Common myeloid progenitor, CD34-positive (primary cell): ENCODE measurements at regions of chr7 and their contacts with region 1.

Region 1: DNA sequence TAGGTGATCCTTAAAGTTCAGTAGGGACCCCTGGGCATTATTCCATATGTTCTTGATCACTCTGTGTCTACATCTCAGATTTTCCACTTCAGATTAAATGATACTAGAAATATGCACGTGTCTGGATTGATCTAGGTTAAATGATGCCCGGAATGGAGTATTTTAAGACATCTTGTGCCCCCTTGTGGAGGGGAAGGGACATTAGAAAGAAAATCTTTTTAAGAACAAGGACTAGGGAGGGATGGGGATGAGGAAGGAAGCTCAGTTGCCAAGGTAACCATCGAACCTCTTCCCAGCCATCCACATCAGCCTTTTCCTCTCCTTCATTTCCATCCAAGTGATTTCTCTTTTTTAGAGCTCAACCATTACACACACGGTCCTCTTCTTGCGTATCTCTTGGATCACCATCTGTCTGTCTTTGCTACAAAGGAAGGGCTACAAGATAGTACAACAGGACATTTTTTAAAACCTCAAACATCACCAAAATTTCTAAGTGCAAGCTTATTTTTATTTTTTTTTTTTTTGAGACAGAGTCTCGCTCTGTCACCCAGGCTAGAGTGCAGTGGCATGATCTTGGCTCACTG is 40.5 kb downstream of the PRSS2 start:
- DNase-seq: peak; percentile 59 to 69 (median 68)
- H3K4me3 ChIP-seq: no peak overlapping the region
- H3K27ac ChIP-seq: no peak overlapping the region
- H3K4me1 ChIP-seq: peaks cover 41 to 45% (median 42%) of the 10 kb centered on the region in 4 experiments
- H3K27me3 ChIP-seq: no peaks in the 10 kb centered on the region

Region 2: GRCh38 chr7:142587578-142588191 is 223.6 kb before region 1 on chr7:
- CTCF ChIA-PET with region 1: interaction called, 16 read pairs
- POLR2A ChIA-PET with region 1: no interaction called
- DNase-seq: peak; percentile 87 to 88 (median 88)
- H3K4me3 ChIP-seq: no peak overlapping the region
- H3K27ac ChIP-seq: no peak overlapping the region
- H3K4me1 ChIP-seq: peaks cover 2 to 27% (median 22%) of the 10 kb centered on the region in 4 experiments
- H3K27me3 ChIP-seq: no peaks in the 10 kb centered on the region

Region 3: GRCh38 chr7:142626420-142627035 is 184.7 kb before region 1 on chr7:
- CTCF ChIA-PET with region 1: interaction called, 167 read pairs
- POLR2A ChIA-PET with region 1: interaction called, 3 read pairs
- DNase-seq: peak; percentile 69 to 85 (median 80)
- H3K4me3 ChIP-seq: peak overlapping the region in 2 of 7 experiments; percentile 15 to 51
- H3K27ac ChIP-seq: no peak overlapping the region
- H3K4me1 ChIP-seq: peaks cover 3 to 25% (median 13%) of the 10 kb centered on the region in 4 experiments
- H3K27me3 ChIP-seq: no peaks in the 10 kb centered on the region

Region 4: DNA sequence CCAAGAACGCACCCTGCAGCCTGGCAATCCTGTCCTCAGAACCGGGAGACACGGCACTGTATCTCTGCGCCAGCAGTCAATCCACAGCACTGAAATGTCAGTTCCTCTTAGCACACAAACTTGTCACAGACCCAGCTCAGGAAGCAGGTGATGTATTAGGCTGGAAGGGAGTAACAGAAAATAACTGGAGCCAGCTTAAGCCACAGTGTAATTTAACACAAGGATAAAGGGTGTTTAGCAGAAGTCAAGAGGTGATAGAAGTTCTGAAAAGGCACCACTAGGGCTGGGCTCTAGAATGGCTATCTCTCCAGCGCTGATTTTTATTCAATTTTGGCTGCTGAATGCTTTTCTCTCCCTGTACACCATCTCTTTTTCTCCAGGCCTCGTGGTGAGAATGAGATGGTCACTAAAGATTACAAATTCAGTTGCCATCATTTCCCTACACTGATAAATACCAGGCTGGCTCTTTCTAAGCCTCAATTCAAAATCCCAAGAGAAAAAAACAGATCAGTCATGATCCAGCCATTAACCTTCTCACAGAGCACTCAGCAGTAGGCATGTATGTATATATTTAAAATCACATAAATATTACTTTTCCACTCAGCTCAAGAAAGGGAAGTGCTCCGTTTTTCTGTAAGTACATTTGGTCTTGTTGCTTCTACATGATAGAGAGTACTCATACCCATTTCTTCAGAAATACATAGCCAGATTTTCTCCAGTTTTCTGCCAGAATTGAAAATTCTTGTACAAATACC is 164.7 kb before region 1 on chr7:
- CTCF ChIA-PET with region 1: interaction called, 10 read pairs
- POLR2A ChIA-PET with region 1: no interaction called
- DNase-seq: peak; percentile 69 to 95 (median 90)
- H3K4me3 ChIP-seq: peak overlapping the region in 6 of 7 experiments; percentile 49 to 78 (median 63)
- H3K27ac ChIP-seq: peak overlapping the region; percentile 46 to 84
- H3K4me1 ChIP-seq: peaks cover 9 to 42% (median 23%) of the 10 kb centered on the region in 4 experiments
- H3K27me3 ChIP-seq: no peaks in the 10 kb centered on the region

Region 5: DNA sequence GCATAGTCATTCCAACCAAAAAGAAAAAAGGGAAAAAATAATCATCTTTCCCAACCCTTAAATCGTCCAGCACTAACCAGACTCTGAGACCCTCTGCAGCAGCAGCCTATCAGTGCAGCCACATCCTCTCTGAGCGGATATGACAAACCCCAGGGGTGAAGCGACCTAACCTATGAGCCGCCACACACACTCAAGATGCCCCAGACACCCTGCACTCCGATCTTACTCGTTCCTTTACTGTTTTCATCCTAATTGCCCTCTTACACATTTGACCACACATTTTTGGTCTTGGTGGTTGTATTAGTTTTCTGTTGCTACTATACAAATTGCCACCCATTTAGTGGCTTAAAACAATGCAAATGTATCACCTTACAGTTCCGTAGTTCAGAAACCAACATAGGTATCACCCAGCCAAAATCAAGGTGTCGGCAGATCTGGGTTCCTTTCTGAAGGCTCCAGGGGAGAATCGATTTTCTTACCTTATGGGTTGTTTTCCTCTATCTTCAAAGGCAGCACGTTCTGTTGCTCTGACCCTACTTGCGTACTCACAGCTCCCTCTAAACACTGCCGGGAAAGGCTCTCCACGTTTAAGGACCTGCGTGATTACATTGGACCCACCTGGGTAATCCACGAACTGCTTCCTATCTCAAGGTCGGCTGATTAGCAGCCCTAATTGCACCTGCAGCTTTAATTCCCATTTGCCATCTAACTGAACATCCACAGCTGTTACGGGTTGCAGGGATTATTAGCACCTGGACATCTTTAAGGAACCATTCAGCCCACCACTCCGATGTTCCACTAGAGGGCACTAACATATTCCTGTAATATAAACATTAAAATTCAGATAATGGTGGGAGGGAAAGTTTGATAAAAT is 99.3 kb before region 1 on chr7:
- CTCF ChIA-PET with region 1: interaction called, 13 read pairs
- POLR2A ChIA-PET with region 1: interaction called, 23 read pairs
- DNase-seq: peak; percentile 52 to 87 (median 56)
- H3K4me3 ChIP-seq: peak overlapping the region in 1 of 7 experiments; percentile 54
- H3K27ac ChIP-seq: peak overlapping the region in 1 of 2 experiments; percentile 74
- H3K4me1 ChIP-seq: peaks cover 50 to 91% (median 82%) of the 10 kb centered on the region in 4 experiments
- H3K27me3 ChIP-seq: no peaks in the 10 kb centered on the region

Region 6: DNA sequence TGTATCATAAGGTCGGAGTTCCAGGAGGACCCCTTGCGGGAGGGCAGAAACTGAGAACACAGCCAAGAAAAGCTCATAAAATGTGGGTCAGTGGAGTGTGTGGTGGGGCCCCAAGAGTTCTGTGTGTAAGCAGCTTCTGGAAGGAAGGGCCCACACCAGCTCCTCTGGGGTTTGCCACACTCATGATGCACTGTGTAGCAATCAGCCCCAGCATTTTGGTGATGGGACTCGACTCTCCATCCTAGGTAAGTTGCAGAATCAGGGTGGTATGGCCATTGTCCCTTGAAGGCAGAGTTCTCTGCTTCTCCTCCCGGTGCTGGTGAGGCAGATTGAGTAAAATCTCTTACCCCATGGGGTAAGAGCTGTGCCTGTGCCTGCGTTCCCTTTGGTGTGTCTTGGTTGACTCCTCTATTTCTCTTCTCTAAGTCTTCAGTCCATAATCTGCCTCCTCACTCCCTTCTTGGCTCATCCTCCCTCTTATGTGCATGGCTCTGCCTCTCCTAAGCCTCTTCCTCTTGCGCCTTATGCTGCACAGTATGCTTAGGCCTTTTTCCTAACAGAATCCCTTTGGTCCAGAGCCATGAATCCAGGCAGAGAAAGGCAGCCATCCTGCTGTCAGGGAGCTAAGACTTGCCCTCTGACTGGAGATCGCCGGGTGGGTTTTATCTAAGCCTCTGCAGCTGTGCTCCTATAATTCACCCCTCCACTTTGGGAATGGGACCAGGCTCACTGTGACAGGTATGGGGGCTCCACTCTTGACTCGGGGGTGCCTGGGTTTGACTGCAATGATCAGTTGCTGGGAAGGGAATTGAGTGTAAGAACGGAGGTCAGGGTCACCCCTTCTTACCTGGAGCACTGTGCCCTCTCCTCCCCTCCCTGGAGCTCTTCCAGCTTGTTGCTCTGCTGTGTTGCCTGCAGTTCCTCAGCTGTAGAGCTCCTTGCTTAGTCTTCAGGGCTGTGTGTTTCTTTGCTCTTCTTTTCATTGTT is 22.6 kb before region 1 on chr7:
- CTCF ChIA-PET with region 1: interaction called, 679 read pairs
- POLR2A ChIA-PET with region 1: interaction called, 96 read pairs
- DNase-seq: no peak
- H3K4me3 ChIP-seq: no peak overlapping the region
- H3K27ac ChIP-seq: no peak overlapping the region
- H3K4me1 ChIP-seq: peaks cover 2 to 39% (median 32%) of the 10 kb centered on the region in 4 experiments
- H3K27me3 ChIP-seq: no peaks in the 10 kb centered on the region